Activated CD4-positive, alpha-beta T cell treated with anti-CD3 and anti-CD28 coated beads, Interleukin-2, amount 10 ng/mL, durations not matched to agents 7 days and 5 days (primary cell): ENCODE measurements at regions of chr12 and their contacts with region 1.

Region 1: GRCh38 chr12:52023182-52023975 is 16.6 kb downstream of the TAMALIN start:
- DNase-seq: peak; percentile 93
- H3K4me3 Mint-ChIP-seq: peak overlapping the region; percentile 84
- H3K27ac Mint-ChIP-seq: peak overlapping the region; percentile 99
- H3K4me1 Mint-ChIP-seq: peaks cover 46% of the 10 kb centered on the region
- H3K27me3 Mint-ChIP-seq: no peaks in the 10 kb centered on the region

Region 2: DNA sequence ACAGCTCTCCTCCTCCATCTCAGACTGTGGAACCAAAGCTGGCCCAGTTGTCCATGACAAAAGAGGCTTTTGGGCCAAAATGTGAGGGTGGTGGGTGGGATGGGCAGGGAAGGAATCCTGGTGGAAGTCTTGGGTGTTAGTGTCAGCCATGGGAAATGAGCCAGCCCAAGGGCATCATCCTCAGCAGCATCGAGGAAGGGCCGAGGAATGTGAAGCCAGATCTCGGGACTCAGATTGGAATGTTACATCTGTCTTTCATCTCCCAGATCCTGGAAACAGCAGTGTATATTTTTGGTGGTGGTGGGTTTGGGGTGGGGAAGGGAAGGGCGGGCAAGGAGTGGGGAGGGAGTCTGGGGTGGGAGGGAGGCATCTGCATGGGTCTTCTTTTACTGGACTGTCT is 28.4 kb before region 1 on chr12:
- CTCF ChIA-PET with region 1: interaction called, 35 read pairs
- POLR2A ChIA-PET with region 1: no interaction called
- DNase-seq: no peak
- H3K4me3 Mint-ChIP-seq: no peak overlapping the region
- H3K27ac Mint-ChIP-seq: no peak overlapping the region
- H3K4me1 Mint-ChIP-seq: peaks cover 6% of the 10 kb centered on the region
- H3K27me3 Mint-ChIP-seq: no peaks in the 10 kb centered on the region

Region 3: DNA sequence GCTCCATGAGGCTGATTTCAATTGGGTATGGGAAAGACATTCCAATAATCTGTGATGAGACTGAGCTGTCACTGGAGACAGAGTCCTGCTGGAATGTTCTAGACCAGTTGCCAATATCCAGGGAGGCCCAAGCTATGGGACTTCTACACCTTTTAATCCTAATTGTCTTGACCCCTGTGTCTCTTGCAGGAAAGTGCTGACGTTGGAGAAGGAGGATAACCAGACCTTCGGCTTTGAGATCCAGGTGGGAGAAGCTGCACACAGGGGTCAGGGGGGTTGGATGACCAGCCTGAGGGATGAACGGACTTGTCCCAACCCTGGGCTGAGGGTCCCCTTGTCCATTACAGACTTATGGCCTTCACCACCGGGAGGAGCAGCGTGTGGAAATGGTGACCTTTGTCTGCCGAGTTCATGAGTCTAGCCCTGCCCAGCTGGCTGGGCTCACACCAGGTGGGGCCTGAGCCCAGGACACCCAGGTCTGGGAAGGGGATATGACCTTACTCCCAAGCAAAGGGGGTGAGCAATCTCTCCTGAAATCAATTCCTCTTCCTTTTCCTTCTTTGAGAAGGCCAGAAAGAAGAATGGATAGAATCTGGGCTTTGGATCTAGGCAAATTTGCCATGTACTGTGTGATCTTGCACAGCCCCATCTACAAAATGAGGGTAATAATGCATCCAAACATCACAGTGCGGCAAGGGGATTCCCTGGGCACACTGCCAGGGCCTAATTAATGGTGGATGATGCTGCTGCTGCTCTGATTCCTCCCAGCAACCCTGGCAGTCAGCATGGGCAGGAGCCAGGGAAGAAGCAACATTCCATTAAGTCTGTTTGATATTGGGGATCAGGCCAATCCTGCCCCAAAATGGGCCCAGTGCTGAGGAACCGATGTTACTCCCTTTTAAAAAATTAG is 12.4 kb before region 1 on chr12:
- CTCF ChIA-PET with region 1: interaction called, 168 read pairs
- POLR2A ChIA-PET with region 1: interaction called, 3 read pairs
- DNase-seq: no peak
- H3K4me3 Mint-ChIP-seq: no peak overlapping the region
- H3K27ac Mint-ChIP-seq: no peak overlapping the region
- H3K4me1 Mint-ChIP-seq: peaks cover 17% of the 10 kb centered on the region
- H3K27me3 Mint-ChIP-seq: peaks cover 15% of the 10 kb centered on the region

Region 4: GRCh38 chr12:52058631-52059361 is 35.4 kb after region 1 on chr12:
- CTCF ChIA-PET with region 1: interaction called, 33 read pairs
- POLR2A ChIA-PET with region 1: no interaction called
- DNase-seq: no peak
- H3K4me3 Mint-ChIP-seq: no peak overlapping the region
- H3K27ac Mint-ChIP-seq: no peak overlapping the region
- H3K4me1 Mint-ChIP-seq: no peaks in the 10 kb centered on the region
- H3K27me3 Mint-ChIP-seq: no peaks in the 10 kb centered on the region

Region 5: DNA sequence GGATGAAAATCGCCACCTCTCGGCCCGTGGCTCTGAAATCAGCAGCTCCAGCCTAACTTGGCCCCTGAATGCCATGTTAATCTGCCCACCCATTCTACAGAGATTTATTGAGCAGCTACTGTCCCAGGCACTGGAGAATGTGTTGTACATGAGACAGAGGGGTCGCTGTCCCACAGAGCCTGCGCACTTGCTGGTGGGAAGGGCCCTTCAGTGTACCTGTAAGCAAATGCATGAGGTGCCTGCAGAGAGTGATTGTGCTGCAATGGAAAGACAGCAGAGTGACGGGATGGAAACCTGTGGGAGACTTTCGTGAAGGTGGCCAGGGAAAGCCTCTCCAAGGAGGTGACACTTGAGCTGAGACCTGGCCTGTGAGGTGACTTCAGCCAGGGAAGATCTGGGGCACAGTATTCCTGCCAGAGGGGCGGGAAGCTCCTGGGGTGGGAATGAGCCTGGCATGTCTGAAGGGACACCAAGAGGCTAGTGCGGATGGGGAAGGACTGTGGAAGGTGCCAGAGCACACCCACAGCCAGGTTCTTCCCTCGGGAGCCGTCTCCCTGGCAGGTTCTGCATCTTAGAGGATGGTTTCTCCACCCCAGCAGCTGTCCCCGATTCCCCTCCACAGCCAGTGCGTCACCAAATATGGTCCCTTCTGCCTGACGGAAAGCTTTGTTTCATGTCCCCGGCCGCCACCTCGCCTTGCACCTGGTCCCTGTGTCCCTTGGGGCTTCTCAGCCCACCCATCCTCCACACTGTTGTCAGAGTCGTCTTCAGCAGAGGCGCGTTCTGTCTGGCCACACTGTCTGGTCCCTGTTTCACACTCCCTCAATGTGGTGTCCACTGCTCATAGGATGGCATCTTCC is 64.8 kb after region 1 on chr12:
- CTCF ChIA-PET with region 1: interaction called, 60 read pairs
- POLR2A ChIA-PET with region 1: no interaction called
- DNase-seq: no peak
- H3K4me3 Mint-ChIP-seq: no peak overlapping the region
- H3K27ac Mint-ChIP-seq: no peak overlapping the region
- H3K4me1 Mint-ChIP-seq: peaks cover 6% of the 10 kb centered on the region
- H3K27me3 Mint-ChIP-seq: peaks cover 52% of the 10 kb centered on the region

Region 6: DNA sequence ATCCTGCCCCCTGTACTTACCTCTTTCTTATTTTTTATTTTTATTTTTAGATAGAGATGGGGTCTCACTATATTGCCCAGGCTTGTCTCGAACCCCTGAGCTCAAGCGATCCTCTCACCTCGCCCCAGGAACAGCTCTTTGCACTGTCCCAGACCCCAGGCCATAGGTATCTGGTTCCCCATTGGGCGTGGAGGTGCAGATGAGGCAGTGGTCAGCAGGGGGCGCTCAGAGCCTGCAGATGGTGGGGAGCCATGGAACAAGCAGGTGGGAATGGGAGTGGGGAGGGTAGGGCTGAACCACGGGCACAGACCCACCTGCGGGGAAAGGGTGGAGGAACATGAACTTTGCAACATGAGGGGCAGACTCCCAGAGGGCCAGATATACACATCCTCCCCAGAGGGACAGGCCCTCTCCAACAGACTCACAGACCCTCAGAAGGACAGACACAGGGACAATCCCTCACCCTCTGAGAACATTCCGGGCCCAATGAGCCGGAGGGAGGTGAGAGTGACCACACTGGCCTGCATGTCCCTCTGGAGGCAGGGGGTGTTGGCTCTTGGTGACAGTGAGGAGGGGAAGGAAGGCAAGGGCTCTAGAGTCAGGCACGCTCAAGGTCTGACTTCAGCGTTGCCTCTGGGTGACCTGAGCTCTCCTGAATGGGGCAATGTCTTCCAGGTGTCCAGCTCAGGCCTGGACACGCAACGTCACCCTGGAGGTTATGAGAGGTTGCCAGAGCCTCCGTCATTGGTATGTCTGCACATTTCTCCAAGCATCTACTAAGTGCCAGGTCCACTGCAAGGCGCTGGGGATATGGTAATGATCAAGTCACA is 133.6 kb after region 1 on chr12:
- CTCF ChIA-PET with region 1: no interaction called
- POLR2A ChIA-PET with region 1: no interaction called
- DNase-seq: peak; percentile 76
- H3K4me3 Mint-ChIP-seq: no peak overlapping the region
- H3K27ac Mint-ChIP-seq: no peak overlapping the region
- H3K4me1 Mint-ChIP-seq: peaks cover 38% of the 10 kb centered on the region
- H3K27me3 Mint-ChIP-seq: no peaks in the 10 kb centered on the region